WTC11 (cell line): ENCODE measurements at regions of chr13 and their contacts with region 1.

Region 1: GRCh38 chr13:62357887-62358645 is 942.4 kb upstream of the PCDH20 start:
- DNase-seq: peak; percentile 64
- ATAC-seq: peak; percentile 100
- H3K4me3 Mint-ChIP-seq: no peak overlapping the region
- H3K27ac Mint-ChIP-seq: no peak overlapping the region
- H3K4me1 Mint-ChIP-seq: peaks cover 27% of the 10 kb centered on the region
- H3K27me3 Mint-ChIP-seq: no peaks in the 10 kb centered on the region
- CTCF ChIP-seq: peak; percentile 63

Region 2: DNA sequence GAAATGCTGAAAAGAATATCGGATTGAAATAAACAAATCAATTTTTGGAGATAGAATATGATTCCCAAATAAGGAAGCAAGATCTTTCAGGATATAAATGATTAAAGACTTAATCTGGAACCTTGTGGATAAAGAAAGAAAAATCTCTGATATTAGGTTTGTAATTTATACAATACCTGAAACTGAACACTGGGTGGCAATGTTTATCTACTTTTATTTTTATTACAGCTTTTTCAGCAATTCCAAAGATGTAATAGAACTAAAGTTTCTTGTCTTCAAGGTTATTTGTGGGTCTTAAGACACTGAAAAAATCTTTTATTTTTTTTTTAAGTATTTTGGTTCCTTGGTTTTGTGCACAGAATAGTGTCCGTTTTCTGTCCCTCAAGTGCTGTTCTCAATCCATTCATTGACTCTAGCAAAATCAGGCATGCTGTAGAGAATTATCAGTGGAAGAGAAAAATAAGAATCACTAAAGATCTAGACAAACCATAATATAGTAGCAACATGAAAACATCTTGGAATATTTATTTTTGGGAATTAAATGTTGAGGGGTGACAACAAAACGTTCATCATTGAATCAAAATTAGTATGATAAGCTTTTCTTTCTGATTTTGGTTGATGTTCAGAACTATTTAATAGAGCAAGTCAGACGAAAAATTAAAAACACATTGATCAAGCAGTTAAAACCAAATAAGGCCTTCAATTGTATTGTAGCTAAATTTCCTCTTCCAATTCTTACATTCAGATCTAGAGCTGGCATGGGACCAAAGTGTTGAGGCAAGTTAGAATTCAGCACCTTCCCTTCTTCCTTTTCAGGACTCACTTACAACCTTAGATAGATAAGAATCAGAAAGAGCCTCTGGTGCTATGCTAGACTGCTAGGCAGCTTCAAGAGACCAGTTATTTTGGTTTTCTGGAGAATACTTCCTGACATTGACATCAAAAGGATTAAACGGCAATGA is 238.0 kb before region 1 on chr13:
- CTCF ChIA-PET with region 1: interaction called, 27 read pairs
- POLR2A ChIA-PET with region 1: no interaction called
- DNase-seq: no peak
- ATAC-seq: no peak
- H3K4me3 Mint-ChIP-seq: no peak overlapping the region
- H3K27ac Mint-ChIP-seq: no peak overlapping the region
- H3K4me1 Mint-ChIP-seq: no peaks in the 10 kb centered on the region; the same call in 1 of the 2 replicates
- H3K27me3 Mint-ChIP-seq: no peaks in the 10 kb centered on the region
- CTCF ChIP-seq: peak; percentile 45; the same call in 1 of the 2 replicates

Region 3: GRCh38 chr13:62320129-62321108 is 37.6 kb before region 1 on chr13:
- CTCF ChIA-PET with region 1: interaction called, 11 read pairs
- POLR2A ChIA-PET with region 1: no interaction called
- DNase-seq: no peak
- ATAC-seq: peak; percentile 47; the same call in 1 of the 2 replicates
- H3K4me3 Mint-ChIP-seq: no peak overlapping the region
- H3K27ac Mint-ChIP-seq: no peak overlapping the region
- H3K4me1 Mint-ChIP-seq: no peaks in the 10 kb centered on the region
- H3K27me3 Mint-ChIP-seq: no peaks in the 10 kb centered on the region
- CTCF ChIP-seq: 0 out of 2 replicates have a peak, but pooled peaks have one; percentile 25